HEK293 (cell line): ENCODE measurements at regions of chr2 and their contacts with region 1.

Region 1: GRCh38 chr2:98487806-98488651 is 43.4 kb downstream of the INPP4A start:
- H3K4me3 ChIP-seq: no peak overlapping the region
- H3K27ac ChIP-seq: no peak overlapping the region
- H3K4me1 ChIP-seq: no peaks in the 10 kb centered on the region
- CTCF ChIP-seq: peak; percentile 18; the same call in 1 of the 2 replicates

Region 2: DNA sequence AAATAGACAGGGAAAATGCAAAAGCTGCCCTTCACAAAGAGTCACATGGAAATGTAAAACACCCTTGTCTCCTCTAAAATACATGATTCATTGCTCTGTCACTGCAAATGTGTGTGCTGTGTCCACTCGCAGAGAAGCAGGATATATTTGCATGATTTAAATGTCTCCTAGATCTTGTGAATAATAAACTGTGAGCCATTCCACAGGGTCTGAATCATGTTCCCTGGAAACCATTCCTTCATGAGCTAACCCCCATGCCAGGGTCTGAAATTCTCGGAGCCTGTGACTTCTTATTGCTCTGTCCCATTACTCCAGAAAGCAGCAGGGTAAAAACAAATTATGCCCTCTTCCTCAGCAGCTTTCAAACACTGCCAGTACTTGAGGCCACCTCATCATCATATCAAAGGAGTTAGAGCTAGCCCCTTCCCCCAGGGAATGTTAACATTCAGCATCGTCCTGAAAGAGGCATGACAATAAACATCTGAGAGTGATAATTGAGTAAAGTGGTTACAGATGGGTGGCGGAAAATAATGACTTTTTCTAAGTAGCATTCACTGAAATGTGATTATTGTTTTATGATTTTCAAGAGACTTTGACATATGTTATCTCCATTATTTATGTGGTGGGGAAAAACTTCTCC is 153.5 kb before region 1 on chr2:
- CTCF ChIA-PET with region 1: no interaction called
- POLR2A ChIA-PET with region 1: no interaction called
- H3K4me3 ChIP-seq: no peak overlapping the region
- H3K27ac ChIP-seq: peak overlapping the region; percentile 40; the same call in 1 of the 2 replicates
- H3K4me1 ChIP-seq: peaks cover 12% of the 10 kb centered on the region
- CTCF ChIP-seq: no peak

Region 3: DNA sequence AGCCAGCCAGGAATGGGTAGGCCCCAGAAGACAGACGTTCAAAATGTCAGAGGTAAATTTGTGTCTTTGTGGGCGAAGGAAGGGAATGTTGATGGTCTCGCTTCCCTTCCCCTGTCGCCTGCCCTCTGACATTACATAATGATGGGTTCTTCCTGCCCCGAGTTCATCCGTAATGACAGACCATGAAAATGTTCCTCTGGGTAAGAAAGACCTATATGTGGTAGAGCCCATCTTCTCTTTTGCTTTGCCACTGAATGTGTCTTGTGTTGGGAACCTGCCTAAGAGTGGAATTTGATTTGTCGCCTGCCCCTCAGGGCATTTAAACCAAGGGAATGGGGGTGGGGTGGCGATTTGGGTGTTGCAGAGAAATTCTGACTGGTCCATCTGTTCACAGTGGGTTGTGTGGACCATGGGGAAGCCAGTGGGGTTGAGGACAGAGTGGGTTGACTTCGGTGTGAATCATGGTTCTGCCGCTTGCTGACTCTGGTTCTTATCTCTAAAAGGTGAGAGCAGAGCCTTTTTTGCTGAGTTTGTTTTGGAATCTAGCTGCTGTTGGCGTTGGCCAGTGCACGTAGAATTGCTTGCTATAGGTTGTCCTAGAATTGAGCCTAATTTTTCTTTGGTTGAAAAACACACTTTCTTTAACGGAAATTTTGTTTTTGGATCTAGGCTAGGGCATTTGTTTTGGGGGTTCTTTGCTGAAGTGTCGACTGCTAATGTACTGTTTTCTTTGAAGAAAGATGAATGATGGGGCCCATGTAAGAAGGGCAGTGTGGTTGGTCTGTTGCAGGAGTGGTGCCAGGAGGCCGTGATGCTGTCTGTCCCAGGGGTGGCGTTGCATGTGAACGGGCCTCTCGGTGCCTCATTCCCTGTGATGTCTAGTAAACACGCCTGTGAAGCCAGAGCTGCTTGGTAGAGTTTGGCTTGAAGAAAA is 42.1 kb before region 1 on chr2:
- CTCF ChIA-PET with region 1: interaction called, 12 read pairs
- POLR2A ChIA-PET with region 1: no interaction called
- H3K4me3 ChIP-seq: peak overlapping the region; percentile 76
- H3K27ac ChIP-seq: peak overlapping the region; percentile 64
- H3K4me1 ChIP-seq: peaks cover 14% of the 10 kb centered on the region
- CTCF ChIP-seq: peak; percentile 25; the same call in 1 of the 2 replicates

Region 4: DNA sequence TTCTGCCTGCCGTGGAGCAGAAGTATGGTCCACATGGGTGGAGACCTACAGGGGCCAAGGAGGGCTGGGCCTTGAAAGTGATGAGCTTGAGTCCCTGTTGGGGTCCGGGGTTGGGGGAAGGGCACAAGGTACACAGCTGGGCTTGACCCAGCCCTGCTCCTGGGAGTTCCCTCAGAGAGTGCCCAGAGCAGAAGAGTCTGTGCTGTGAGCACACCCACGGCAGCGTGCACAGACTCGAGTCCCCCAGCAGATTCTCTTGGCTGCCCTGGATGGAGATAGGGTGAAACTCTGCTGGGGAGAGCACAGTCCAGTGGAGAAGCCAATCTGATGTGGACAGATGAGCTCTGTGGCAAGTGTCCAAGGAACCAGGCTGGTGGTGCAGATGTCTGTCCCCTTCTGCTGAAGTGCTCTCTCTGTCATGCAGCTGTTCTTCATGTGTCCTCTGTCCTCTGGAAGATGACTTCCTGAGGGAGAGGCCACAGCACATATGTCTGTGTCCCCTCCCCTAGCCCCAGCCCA is 15.8 kb before region 1 on chr2:
- CTCF ChIA-PET with region 1: interaction called, 14 read pairs
- POLR2A ChIA-PET with region 1: no interaction called
- H3K4me3 ChIP-seq: no peak overlapping the region
- H3K27ac ChIP-seq: no peak overlapping the region
- H3K4me1 ChIP-seq: peaks cover 19% of the 10 kb centered on the region
- CTCF ChIP-seq: no peak